Calu3 (cell line): ENCODE measurements at regions of chr7 and their contacts with region 1.

Region 1: DNA sequence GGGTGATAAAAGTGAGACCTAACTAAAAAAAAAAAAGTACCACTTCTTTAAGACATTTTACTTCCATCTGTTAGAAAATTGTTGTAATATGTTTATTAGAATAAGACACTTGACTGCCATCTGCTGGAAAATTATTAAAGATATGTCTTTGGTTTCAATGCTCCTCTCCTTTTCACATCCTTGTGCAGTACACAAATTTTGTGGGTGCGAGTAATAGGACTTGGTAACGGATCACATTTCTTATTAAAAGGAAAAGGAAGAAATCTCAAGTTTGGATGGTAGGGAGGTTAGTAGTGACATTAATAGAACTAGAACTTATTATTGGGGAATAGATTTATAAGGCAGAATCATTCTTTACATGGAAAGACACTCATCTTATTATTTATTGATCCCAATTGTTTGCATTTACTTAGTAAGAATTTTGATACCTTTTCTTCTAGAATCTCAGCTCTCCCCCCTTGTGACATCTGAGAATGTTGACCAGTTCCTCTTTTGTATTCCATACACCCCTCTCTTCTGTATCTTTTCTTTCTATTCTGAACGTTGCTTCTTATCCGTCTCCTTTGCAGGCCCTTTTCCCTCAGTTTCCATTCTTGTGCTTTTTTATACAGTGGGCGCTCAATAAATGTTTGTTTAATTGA is 43.1 kb upstream of the RPA3 start:
- DNase-seq: no peak
- H3K4me3 Mint-ChIP-seq: peak overlapping the region; percentile 66
- H3K27ac Mint-ChIP-seq: peak overlapping the region; percentile 5
- H3K4me1 Mint-ChIP-seq: peaks cover 39% of the 10 kb centered on the region
- H3K27me3 Mint-ChIP-seq: no peaks in the 10 kb centered on the region
- CTCF ChIP-seq: no peak

Region 2: DNA sequence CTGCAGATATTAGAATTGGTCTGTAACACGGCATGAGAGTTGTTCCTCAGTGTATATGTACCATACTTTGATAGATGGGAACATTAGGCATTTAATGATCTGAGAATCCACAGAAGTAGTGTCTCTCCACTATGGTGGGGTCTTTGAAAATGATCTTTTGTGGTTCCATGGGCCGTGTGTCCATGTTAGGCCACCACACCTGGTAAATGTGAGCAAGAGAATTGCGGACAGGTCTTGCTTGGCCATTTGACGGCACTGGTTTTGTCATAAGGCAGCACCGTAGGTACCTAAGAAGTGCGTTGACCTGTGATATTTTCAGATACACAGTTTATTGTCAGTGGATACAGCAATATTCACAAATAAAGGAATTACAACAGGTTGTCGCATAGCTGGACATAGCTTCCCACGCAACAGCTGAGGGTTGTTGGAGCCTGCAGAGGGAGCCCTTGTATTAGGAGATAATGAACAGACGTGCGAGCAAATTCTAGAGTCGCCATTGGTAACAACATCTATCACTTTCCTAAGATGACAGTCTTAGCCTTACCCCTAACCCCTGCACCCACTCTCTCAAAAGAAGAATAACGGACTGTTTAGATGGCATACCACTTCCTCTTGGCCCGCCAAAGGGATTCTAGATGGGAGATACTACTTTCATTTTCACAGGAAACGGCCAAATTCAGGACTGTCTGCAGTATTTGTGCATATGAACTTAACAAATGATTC is 337.1 kb before region 1 on chr7:
- CTCF ChIA-PET with region 1: interaction called, 3 read pairs
- intact Hi-C with region 1: loop called (anchors 5 kb)
- DNase-seq: peak; percentile 82
- H3K4me3 Mint-ChIP-seq: peak overlapping the region; percentile 51
- H3K27ac Mint-ChIP-seq: no peak overlapping the region
- H3K4me1 Mint-ChIP-seq: peaks cover 8% of the 10 kb centered on the region
- H3K27me3 Mint-ChIP-seq: no peaks in the 10 kb centered on the region
- CTCF ChIP-seq: peak; percentile 92

Region 3: GRCh38 chr7:7696458-7697119 is 64.9 kb before region 1 on chr7:
- CTCF ChIA-PET with region 1: interaction called, 9 read pairs
- intact Hi-C with region 1: loop called (anchors 5 kb)
- DNase-seq: peak; percentile 27
- H3K4me3 Mint-ChIP-seq: peak overlapping the region; percentile 36
- H3K27ac Mint-ChIP-seq: peak overlapping the region; percentile 76
- H3K4me1 Mint-ChIP-seq: peaks cover 48% of the 10 kb centered on the region
- H3K27me3 Mint-ChIP-seq: no peaks in the 10 kb centered on the region
- CTCF ChIP-seq: no peak

Region 4: DNA sequence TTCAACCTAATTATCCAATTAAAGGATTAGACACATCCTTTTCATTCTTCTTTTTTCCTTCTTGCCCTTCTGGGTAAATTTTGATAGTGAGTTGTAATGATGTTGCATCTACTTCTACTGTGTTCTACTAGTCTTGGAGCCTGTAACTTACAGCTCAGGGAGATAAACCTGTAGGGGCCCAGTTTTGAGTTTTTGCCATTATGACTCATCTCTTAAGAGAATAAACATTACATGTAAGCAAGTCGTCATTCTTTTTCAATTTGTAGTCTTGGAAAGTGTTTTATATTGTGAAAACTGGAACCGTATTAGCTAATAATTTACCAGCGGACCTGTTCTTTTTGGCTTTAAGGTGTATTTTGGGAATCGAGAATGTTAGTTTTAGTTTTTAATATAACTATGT is 46.7 kb after region 1 on chr7:
- CTCF ChIA-PET with region 1: no interaction called
- intact Hi-C with region 1: no loop called
- DNase-seq: no peak
- H3K4me3 Mint-ChIP-seq: no peak overlapping the region
- H3K27ac Mint-ChIP-seq: no peak overlapping the region
- H3K4me1 Mint-ChIP-seq: no peaks in the 10 kb centered on the region
- H3K27me3 Mint-ChIP-seq: no peaks in the 10 kb centered on the region
- CTCF ChIP-seq: no peak

Region 5: DNA sequence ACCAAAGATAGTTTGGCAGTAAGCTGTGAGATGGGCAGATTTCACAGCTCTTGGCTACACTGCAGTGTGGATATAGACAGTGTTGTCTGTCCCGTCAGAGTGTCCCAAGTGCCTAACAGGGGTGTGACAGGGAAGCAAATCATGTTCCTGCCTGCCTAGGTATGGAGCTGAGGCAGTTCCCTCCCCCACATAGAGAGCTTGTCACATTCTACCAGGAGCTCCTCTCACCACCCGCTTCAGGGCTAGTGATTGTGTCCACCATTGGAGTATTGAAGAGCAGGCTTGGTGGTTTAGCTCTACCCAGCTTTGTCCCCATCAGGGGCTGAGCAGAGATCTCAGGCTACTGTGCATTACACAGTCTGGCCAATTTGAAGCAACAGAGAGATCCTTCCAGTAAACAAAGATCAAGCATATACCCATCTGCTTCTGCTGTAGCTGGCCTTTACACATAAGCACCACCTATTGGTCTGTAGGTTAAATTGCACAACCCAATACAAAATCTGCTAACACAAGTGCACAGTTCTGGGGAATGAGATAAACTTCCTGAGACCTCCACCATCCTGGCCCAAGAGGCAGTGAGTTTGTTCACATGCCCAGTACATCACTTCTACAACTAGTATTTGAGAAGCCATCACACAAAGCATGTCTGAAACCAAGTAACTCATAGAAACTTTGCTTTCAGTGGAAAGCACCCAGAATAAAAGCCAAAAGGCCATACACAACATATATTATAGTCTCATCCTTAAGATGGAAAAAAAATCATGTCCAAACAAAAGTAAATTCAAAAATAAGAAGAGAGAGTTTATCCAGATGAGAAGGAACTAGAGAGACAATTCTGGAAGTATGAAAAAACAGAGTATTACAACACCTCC is 274.4 kb after region 1 on chr7:
- CTCF ChIA-PET with region 1: interaction called, 5 read pairs
- intact Hi-C with region 1: loop called (anchors 1 kb)
- DNase-seq: no peak
- H3K4me3 Mint-ChIP-seq: no peak overlapping the region
- H3K27ac Mint-ChIP-seq: no peak overlapping the region
- H3K4me1 Mint-ChIP-seq: peaks cover 16% of the 10 kb centered on the region
- H3K27me3 Mint-ChIP-seq: no peaks in the 10 kb centered on the region
- CTCF ChIP-seq: peak; percentile 68

Region 6: DNA sequence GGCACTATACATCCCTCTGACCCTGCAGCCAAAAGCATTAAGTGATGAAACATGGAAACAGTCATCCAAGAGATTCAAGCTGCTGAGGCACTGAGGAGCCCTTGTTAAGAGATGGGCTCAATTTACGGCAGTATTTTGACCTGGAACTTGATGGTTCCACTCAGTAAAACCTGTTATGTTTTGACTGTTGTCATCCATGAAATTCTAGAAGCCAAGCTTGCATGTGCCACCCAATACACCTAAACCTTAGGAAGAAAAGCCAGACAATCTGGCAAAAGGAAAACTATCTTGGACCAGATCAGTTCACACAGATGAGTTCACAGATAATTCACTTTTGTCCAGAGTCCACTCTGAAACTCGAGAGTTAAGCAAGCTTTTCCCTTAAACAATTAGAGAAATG is 447.4 kb after region 1 on chr7:
- CTCF ChIA-PET with region 1: no interaction called
- intact Hi-C with region 1: no loop called
- DNase-seq: no peak
- H3K4me3 Mint-ChIP-seq: no peak overlapping the region
- H3K27ac Mint-ChIP-seq: no peak overlapping the region
- H3K4me1 Mint-ChIP-seq: no peaks in the 10 kb centered on the region
- H3K27me3 Mint-ChIP-seq: no peaks in the 10 kb centered on the region
- CTCF ChIP-seq: no peak

Region 7: GRCh38 chr7:8295638-8296361 is 534.3 kb after region 1 on chr7:
- CTCF ChIA-PET with region 1: interaction called, 3 read pairs
- intact Hi-C with region 1: loop called (anchors 1 kb)
- DNase-seq: peak; percentile 69
- H3K4me3 Mint-ChIP-seq: no peak overlapping the region
- H3K27ac Mint-ChIP-seq: no peak overlapping the region
- H3K4me1 Mint-ChIP-seq: peaks cover 27% of the 10 kb centered on the region
- H3K27me3 Mint-ChIP-seq: no peaks in the 10 kb centered on the region
- CTCF ChIP-seq: peak; percentile 84